Panc1 (cell line): ENCODE measurements at regions of chr3 and their contacts with region 1.

Region 1: GRCh38 chr3:23146163-23146562 is 57.0 kb upstream of the UBE2E2 start:
- DNase-seq: no peak
- ATAC-seq: no peak
- H3K4me3 ChIP-seq: no peak overlapping the region
- H3K27ac ChIP-seq: no peak overlapping the region
- H3K4me1 ChIP-seq: no peaks in the 10 kb centered on the region
- H3K27me3 ChIP-seq: peaks cover 3% of the 10 kb centered on the region
- CTCF ChIP-seq: no peak

Region 2: DNA sequence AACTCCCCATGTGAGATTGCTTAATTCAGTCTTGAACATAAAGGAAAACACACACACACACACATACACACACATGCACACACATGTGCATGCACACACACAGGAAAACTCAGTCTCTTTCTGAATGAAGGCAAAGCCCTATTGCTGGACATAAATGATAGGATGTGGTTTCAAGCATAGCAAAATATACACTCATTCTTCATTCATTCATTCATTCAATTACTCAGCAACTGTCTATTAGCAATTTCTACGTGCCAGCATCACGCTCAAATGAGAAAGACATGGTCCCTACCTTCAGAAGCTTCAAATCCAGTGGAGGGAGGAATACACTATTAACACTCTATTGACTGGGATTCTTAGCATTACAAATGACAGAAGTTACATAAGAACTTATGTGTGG is 15.1 kb after region 1 on chr3:
- CTCF ChIA-PET with region 1: no interaction called
- POLR2A ChIA-PET with region 1: interaction called, 13 read pairs
- in situ Hi-C with region 1: no loop called
- intact Hi-C with region 1: no loop called
- DNase-seq: no peak
- ATAC-seq: no peak
- H3K4me3 ChIP-seq: no peak overlapping the region
- H3K27ac ChIP-seq: no peak overlapping the region
- H3K4me1 ChIP-seq: no peaks in the 10 kb centered on the region
- H3K27me3 ChIP-seq: no peaks in the 10 kb centered on the region
- CTCF ChIP-seq: no peak